Dorsolateral prefrontal cortex (tissue), 120 donors: ENCODE measurements at regions of chr15 and their contacts with region 1.

Region 1: GRCh38 chr15:95259513-95259912 is 1028.2 kb downstream of the MCTP2 start:
- DNase-seq: peak in 9 of 10 donors; percentile 48 to 73 (median 62)
- H3K4me3 ChIP-seq: no peak overlapping the region
- H3K27ac ChIP-seq: peak overlapping the region in 1 of 59 donors; percentile 0
- H3K27me3 ChIP-seq: peaks cover 0 to 66% (median 5%) of the 10 kb centered on the region in 45 donors
- CTCF ChIP-seq: peak; percentile 68 to 93 (median 84)

Region 2: DNA sequence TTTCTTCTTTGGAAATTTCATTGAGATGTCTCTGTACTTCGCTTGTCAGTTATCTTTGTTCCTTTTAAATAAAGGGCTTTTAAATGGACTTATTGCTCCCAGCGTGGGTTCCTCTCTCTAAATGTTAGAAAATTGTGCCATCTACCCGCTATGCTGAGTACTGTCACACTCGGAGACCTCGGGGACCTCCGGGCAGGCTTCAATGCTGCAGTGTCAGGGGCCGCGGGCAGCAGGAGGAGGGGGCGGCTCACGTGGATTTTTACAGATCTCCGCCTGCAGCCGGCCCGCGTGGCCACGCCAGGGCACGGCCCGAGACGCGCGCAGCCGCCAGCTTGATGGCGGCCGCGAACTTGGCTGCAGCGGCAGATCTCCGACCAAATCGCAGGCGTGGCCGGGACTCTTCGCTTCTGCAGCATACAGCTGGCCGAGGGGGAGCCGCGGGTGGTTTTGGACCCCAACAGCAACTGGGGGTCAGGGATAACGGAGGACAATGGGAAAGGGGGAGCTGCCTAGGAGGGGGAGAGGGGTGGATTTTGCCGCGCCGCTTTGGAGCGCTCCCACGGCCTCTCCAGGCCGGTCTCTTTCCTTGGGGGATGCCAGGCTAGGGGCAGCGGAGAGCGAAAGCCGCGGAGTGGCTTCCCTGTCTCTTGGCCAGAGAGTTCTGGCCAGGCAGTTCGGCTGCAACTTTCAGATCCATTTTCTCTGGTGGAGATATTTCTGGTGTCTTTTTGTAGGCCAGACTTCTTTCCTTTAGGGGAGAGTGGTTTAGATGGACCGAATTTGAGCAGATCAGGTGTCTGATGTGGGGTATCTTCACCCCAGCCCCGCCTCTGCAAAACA is 1086.3 kb after region 1 on chr15:
- intact Hi-C with region 1: loop called (anchors 2 to 5 kb)
- DNase-seq: peak in 4 of 10 donors; percentile 21 to 54 (median 42)
- H3K4me3 ChIP-seq: peak overlapping the region in 58 of 59 donors; percentile 6 to 70 (median 44)
- H3K27ac ChIP-seq: peak overlapping the region in 46 of 59 donors; percentile 5 to 94 (median 78)
- H3K27me3 ChIP-seq: peaks cover 5 to 100% (median 97%) of the 10 kb centered on the region in 45 donors
- CTCF ChIP-seq: peak; percentile 22 to 81 (median 66)

Region 3: DNA sequence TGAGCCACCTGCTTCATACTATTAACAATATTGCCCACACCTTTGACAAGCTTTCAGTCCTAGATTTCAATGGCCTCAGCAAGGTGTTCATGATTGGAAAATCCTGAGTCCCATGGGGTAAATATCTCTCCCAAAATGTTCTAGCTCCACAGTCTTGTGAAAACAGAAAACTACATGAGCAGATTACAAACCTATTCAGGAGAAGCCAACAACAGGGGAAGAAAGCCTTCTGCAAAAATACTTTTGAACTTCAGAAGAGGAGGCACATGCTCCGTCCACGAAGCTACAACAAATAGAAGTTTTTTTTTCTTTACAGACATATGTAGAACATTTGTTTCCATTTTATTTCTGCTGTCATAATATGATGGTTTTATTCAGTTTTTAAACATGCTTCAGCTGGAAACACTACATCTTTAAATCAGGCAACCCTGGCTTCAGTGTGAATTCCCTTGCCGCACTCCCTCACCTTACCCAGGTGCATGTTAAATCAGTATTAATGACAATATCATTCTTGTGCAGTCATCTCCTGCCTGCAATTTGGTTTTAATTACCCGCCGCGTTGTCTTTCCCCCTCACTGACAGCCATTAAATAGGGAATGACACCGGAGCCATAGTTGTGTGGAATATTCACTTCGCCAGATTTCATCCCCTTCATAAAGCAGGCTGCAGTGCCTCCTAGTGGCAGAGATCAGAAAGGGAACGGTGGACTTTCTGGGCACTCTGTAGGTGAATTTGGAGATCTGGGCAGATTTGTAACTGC is 1975.5 kb after region 1 on chr15:
- intact Hi-C with region 1: loop called in 1 of 2 experiments (anchors 10 kb)
- DNase-seq: peak in 4 of 10 donors; percentile 29 to 54 (median 40)
- H3K4me3 ChIP-seq: peak overlapping the region in 10 of 59 donors; percentile 2 to 33 (median 13)
- H3K27ac ChIP-seq: no peak overlapping the region
- H3K27me3 ChIP-seq: peaks cover 0 to 66% (median 8%) of the 10 kb centered on the region in 45 donors
- CTCF ChIP-seq: peak; percentile 64 to 87 (median 80)